ENCODE measurements at regions of chr6 and their contacts with region 1.

Region 1: GRCh38 chr6:53725791-53726431 is 60.4 kb upstream of the KLHL31 start:
- DNase-seq: peak; percentile 55 to 71 (median 58)
- H3K4me3 ChIP-seq: no peak overlapping the region
- H3K4me3 Mint-ChIP-seq: no peak overlapping the region
- H3K27ac ChIP-seq: no peak overlapping the region
- H3K27ac Mint-ChIP-seq: no peak overlapping the region
- H3K4me1 ChIP-seq: no peaks in the 10 kb centered on the region
- H3K4me1 Mint-ChIP-seq: peaks cover 2 to 7% (median 5%) of the 10 kb centered on the region in 4 donors
- H3K27me3 ChIP-seq: no peaks in the 10 kb centered on the region
- H3K27me3 Mint-ChIP-seq: peaks cover 2 to 4% of the 10 kb centered on the region in 2 donors

Region 2: GRCh38 chr6:53492860-53493634 is 232.9 kb before region 1 on chr6:
- CTCF ChIA-PET with region 1: interaction called, 385 read pairs
- POLR2A ChIA-PET with region 1: no interaction called
- intact Hi-C with region 1: loop called (anchors 1 kb)
- DNase-seq: peak in 4 of 5 donors; percentile 52 to 55 (median 53)
- H3K4me3 ChIP-seq: no peak overlapping the region
- H3K4me3 Mint-ChIP-seq: no peak overlapping the region
- H3K27ac ChIP-seq: no peak overlapping the region
- H3K27ac Mint-ChIP-seq: peak overlapping the region in 1 of 7 donors; percentile 13
- H3K4me1 ChIP-seq: no peaks in the 10 kb centered on the region
- H3K4me1 Mint-ChIP-seq: peaks cover 0 to 3% (median 1%) of the 10 kb centered on the region in 4 donors
- H3K27me3 ChIP-seq: no peaks in the 10 kb centered on the region
- H3K27me3 Mint-ChIP-seq: peaks cover 5 to 6% of the 10 kb centered on the region in 2 donors

Region 3: GRCh38 chr6:53544470-53545308 is 181.2 kb before region 1 on chr6 and contains the start of gene GCLC:
- CTCF ChIA-PET with region 1: interaction called, 12 read pairs
- POLR2A ChIA-PET with region 1: no interaction called
- intact Hi-C with region 1: loop called (anchors 1 kb)
- DNase-seq: peak; percentile 82 to 85 (median 84)
- H3K4me3 ChIP-seq: peak within 1 kb of the TSS; percentile 61 to 63
- H3K4me3 Mint-ChIP-seq: peak within 1 kb of the TSS; percentile 95 to 99 (median 98)
- H3K27ac ChIP-seq: peak within 1 kb of the TSS; percentile 59
- H3K27ac Mint-ChIP-seq: peak within 1 kb of the TSS; percentile 79 to 96 (median 94)
- H3K4me1 ChIP-seq: peaks cover 51% of the 10 kb centered on the region
- H3K4me1 Mint-ChIP-seq: peaks cover 47 to 73% (median 59%) of the 10 kb centered on the region in 4 donors
- H3K27me3 ChIP-seq: no peaks in the 10 kb centered on the region
- H3K27me3 Mint-ChIP-seq: no peaks in the 10 kb centered on the region
- total RNA-seq, gene GCLC: 39.6 to 40.9 TPM

Region 4: GRCh38 chr6:53701333-53702218 is 24.3 kb before region 1 on chr6:
- CTCF ChIA-PET with region 1: interaction called, 16 read pairs
- POLR2A ChIA-PET with region 1: no interaction called
- intact Hi-C with region 1: no loop called
- DNase-seq: no peak
- H3K4me3 ChIP-seq: no peak overlapping the region
- H3K4me3 Mint-ChIP-seq: no peak overlapping the region
- H3K27ac ChIP-seq: no peak overlapping the region
- H3K27ac Mint-ChIP-seq: no peak overlapping the region
- H3K4me1 ChIP-seq: no peaks in the 10 kb centered on the region
- H3K4me1 Mint-ChIP-seq: no peaks in the 10 kb centered on the region
- H3K27me3 ChIP-seq: no peaks in the 10 kb centered on the region
- H3K27me3 Mint-ChIP-seq: peaks cover 0 to 2% of the 10 kb centered on the region in 2 donors

Region 5: GRCh38 chr6:53741034-53741823 is 15.3 kb after region 1 on chr6:
- CTCF ChIA-PET with region 1: interaction called, 101 read pairs
- POLR2A ChIA-PET with region 1: no interaction called
- intact Hi-C with region 1: no loop called
- DNase-seq: peak in 2 of 5 donors; percentile 14 to 19
- H3K4me3 ChIP-seq: no peak overlapping the region
- H3K4me3 Mint-ChIP-seq: peak overlapping the region in 7 of 8 donors; percentile 10 to 78 (median 64)
- H3K27ac ChIP-seq: no peak overlapping the region
- H3K27ac Mint-ChIP-seq: peak overlapping the region in 3 of 7 donors; percentile 23 to 72 (median 27)
- H3K4me1 ChIP-seq: peaks cover 6% of the 10 kb centered on the region
- H3K4me1 Mint-ChIP-seq: peaks cover 8 to 11% (median 9%) of the 10 kb centered on the region in 4 donors
- H3K27me3 ChIP-seq: no peaks in the 10 kb centered on the region
- H3K27me3 Mint-ChIP-seq: peaks cover 5% of the 10 kb centered on the region in 2 donors

Region 6: GRCh38 chr6:54391577-54391976 is 665.7 kb after region 1 on chr6:
- CTCF ChIA-PET with region 1: no interaction called
- POLR2A ChIA-PET with region 1: no interaction called
- intact Hi-C with region 1: no loop called
- DNase-seq: no peak
- H3K4me3 ChIP-seq: no peak overlapping the region
- H3K4me3 Mint-ChIP-seq: no peak overlapping the region
- H3K27ac ChIP-seq: no peak overlapping the region
- H3K27ac Mint-ChIP-seq: no peak overlapping the region
- H3K4me1 ChIP-seq: no peaks in the 10 kb centered on the region
- H3K4me1 Mint-ChIP-seq: no peaks in the 10 kb centered on the region
- H3K27me3 ChIP-seq: no peaks in the 10 kb centered on the region
- H3K27me3 Mint-ChIP-seq: no peaks in the 10 kb centered on the region

Measured in CD4-positive, alpha-beta memory T cell (primary cell).